A673 (cell line): ENCODE measurements at regions of chr20 and their contacts with region 1.

Region 1: GRCh38 chr20:17497821-17498580 is 33.2 kb downstream of the BFSP1 start:
- DNase-seq: no peak
- H3K4me3 ChIP-seq: no peak overlapping the region
- H3K27ac ChIP-seq: no peak overlapping the region
- H3K4me1 ChIP-seq: no peaks in the 10 kb centered on the region
- H3K27me3 ChIP-seq: no peaks in the 10 kb centered on the region
- CTCF ChIP-seq: no peak

Region 2: GRCh38 chr20:17606001-17606400 is 108.0 kb after region 1 on chr20:
- CTCF ChIA-PET with region 1: interaction called, 20 read pairs
- POLR2A ChIA-PET with region 1: no interaction called
- intact Hi-C with region 1: no loop called
- DNase-seq: no peak
- H3K4me3 ChIP-seq: no peak overlapping the region
- H3K27ac ChIP-seq: no peak overlapping the region
- H3K4me1 ChIP-seq: no peaks in the 10 kb centered on the region
- H3K27me3 ChIP-seq: no peaks in the 10 kb centered on the region
- CTCF ChIP-seq: no peak

Region 3: GRCh38 chr20:17646670-17647371 is 148.8 kb after region 1 on chr20:
- CTCF ChIA-PET with region 1: no interaction called
- POLR2A ChIA-PET with region 1: no interaction called
- intact Hi-C with region 1: no loop called
- DNase-seq: no peak
- H3K4me3 ChIP-seq: no peak overlapping the region
- H3K27ac ChIP-seq: peak overlapping the region; percentile 37
- H3K4me1 ChIP-seq: peaks cover 35% of the 10 kb centered on the region
- H3K27me3 ChIP-seq: no peaks in the 10 kb centered on the region
- CTCF ChIP-seq: no peak

Region 4: DNA sequence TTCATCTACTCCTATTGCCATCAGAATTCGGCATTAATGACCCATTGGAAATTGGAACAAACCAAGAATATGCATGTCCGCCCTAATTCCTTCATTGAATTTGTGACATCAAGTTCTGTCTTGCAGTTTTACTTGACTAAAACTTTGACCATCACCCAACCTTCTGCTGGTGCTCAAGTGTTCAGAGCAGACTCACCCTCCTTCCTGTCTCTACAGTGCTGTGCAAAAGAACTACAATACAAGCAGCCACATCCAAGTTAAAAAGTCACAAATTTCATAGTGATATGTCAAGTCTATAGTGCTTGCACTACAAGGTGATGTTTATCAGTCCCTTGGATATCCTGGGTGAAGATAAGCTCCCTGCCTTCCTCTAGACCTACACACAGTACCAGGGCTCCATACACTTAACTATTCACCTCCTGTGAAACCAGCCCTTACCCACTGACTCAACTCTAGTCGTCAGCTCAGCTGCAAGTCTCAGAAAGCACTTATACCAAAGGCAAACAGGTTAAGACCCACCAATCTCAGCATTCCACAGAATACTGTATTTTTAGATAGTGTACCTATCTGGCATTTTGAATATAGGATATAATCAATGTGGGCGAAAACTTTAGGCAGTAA is 447.0 kb after region 1 on chr20:
- CTCF ChIA-PET with region 1: interaction called, 13 read pairs
- POLR2A ChIA-PET with region 1: no interaction called
- intact Hi-C with region 1: no loop called
- DNase-seq: no peak
- H3K4me3 ChIP-seq: no peak overlapping the region
- H3K27ac ChIP-seq: no peak overlapping the region
- H3K4me1 ChIP-seq: no peaks in the 10 kb centered on the region
- H3K27me3 ChIP-seq: no peaks in the 10 kb centered on the region
- CTCF ChIP-seq: no peak

Region 5: GRCh38 chr20:17956099-17956685 is 458.2 kb after region 1 on chr20:
- CTCF ChIA-PET with region 1: no interaction called
- POLR2A ChIA-PET with region 1: interaction called, 15 read pairs
- intact Hi-C with region 1: no loop called
- DNase-seq: no peak
- H3K4me3 ChIP-seq: no peak overlapping the region
- H3K27ac ChIP-seq: no peak overlapping the region
- H3K4me1 ChIP-seq: peaks cover 37% of the 10 kb centered on the region
- H3K27me3 ChIP-seq: no peaks in the 10 kb centered on the region
- CTCF ChIP-seq: no peak